Heart right ventricle (tissue), 16 donors: ENCODE measurements at regions of chr16 and their contacts with region 1.

Region 1: GRCh38 chr16:84084570-84085270 is 32.0 kb downstream of the MBTPS1 start:
- DNase-seq: peak; percentile 43 to 64
- ATAC-seq: peak in 7 of 8 donors; percentile 9 to 50 (median 40)
- H3K4me3 ChIP-seq: no peak overlapping the region
- H3K27ac ChIP-seq: peak overlapping the region in 6 of 10 donors; percentile 3 to 77 (median 67)
- H3K4me1 ChIP-seq: peaks cover 0 to 54% (median 25%) of the 10 kb centered on the region in 9 donors
- H3K27me3 ChIP-seq: no peaks in the 10 kb centered on the region
- CTCF ChIP-seq: peak; percentile 30 to 74 (median 66)

Region 2: GRCh38 chr16:83980794-83981193 is 103.9 kb before region 1 on chr16:
- intact Hi-C with region 1: no loop called
- DNase-seq: no peak
- ATAC-seq: peak in 1 of 8 donors; percentile 48
- H3K4me3 ChIP-seq: no peak overlapping the region
- H3K27ac ChIP-seq: no peak overlapping the region
- H3K4me1 ChIP-seq: peaks cover 0 to 8% (median 0%) of the 10 kb centered on the region in 9 donors
- H3K27me3 ChIP-seq: no peaks in the 10 kb centered on the region
- CTCF ChIP-seq: no peak

Region 3: GRCh38 chr16:84116720-84117493 is 32.2 kb after region 1 on chr16 and contains the start of gene MBTPS1:
- intact Hi-C with region 1: loop called in 2 of 10 experiments (anchors 1 to 5 kb)
- DNase-seq: peak; percentile 98 to 99
- ATAC-seq: peak; percentile 98 to 100 (median 99)
- H3K4me3 ChIP-seq: peak within 1 kb of the TSS; percentile 73 to 98 (median 88)
- H3K27ac ChIP-seq: peak within 1 kb of the TSS; percentile 76 to 98 (median 93)
- H3K4me1 ChIP-seq: peaks cover 2 to 42% (median 28%) of the 10 kb centered on the region in 9 donors
- H3K27me3 ChIP-seq: no peaks in the 10 kb centered on the region
- CTCF ChIP-seq: peak in 2 of 9 donors; percentile 23 to 32
- total RNA-seq, gene MBTPS1: 55.9 to 122 (median 73.5) TPM

Region 4: DNA sequence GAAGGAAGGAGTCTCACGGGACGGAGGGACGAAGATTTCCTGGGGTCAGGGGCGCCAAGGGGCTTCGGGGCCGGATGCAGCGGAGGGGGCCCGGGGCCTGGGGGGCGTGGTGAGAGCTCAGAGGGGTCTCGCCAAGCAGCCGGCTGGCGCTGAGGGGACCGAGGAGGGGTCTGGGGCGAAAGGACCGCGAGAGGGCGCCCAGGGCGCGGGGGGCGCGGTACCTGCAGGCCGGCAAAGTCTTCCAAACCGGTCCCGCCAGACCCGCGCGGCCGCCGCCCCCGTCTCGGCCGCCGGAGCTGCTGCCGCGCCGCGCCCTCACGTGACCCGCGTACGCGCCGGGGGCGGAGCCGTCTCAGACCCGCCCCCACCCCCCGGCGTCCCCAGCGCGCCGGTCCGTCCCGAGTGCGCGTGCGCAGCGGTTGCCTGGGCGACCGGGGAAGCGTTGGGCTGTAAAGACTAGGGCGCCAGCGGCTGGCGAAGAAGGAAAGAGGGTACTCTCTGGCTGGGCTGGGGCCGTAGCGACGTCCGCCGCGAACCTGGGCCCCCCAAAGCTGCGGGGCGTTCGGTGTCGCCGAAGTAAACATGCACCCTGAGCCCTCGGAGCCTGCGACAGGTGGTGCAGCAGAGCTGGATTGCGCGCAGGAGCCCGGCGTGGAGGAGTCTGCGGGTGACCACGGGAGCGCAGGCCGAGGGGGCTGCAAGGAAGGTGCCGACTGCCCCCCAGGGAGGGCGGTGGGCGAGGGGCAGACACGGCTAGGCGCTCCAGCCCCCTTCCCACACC is 60.3 kb after region 1 on chr16 and contains the starts of genes DNAAF1 and HSDL1:
- intact Hi-C with region 1: loop called in 2 of 10 experiments (anchors 2 to 10 kb)
- DNase-seq: peak; percentile 90 to 95
- ATAC-seq: peak; percentile 91 to 97 (median 96)
- H3K4me3 ChIP-seq: peak within 1 kb of the TSS; percentile 71 to 99 (median 90)
- H3K27ac ChIP-seq: peak within 1 kb of the TSS in 9 of 10 donors; percentile 65 to 90 (median 81)
- H3K4me1 ChIP-seq: peaks cover 0 to 19% (median 10%) of the 10 kb centered on the region in 9 donors
- H3K27me3 ChIP-seq: peaks cover 0 to 5% (median 0%) of the 10 kb centered on the region in 7 donors
- CTCF ChIP-seq: peak in 5 of 9 donors; percentile 6 to 36 (median 21)
- total RNA-seq, gene DNAAF1: 0.23 to 0.54 (median 0.28) TPM in 3 of 10 donors, not detected in the others
- total RNA-seq, gene HSDL1: 19.4 to 38.5 (median 25.3) TPM

Region 5: GRCh38 chr16:84194470-84195200 is 109.9 kb after region 1 on chr16:
- intact Hi-C with region 1: loop called in 3 of 10 experiments (anchors 5 kb)
- DNase-seq: no peak
- ATAC-seq: peak in 2 of 8 donors; percentile 8 to 23
- H3K4me3 ChIP-seq: peak overlapping the region in 1 of 10 donors; percentile 1
- H3K27ac ChIP-seq: no peak overlapping the region
- H3K4me1 ChIP-seq: peaks cover 0 to 18% (median 0%) of the 10 kb centered on the region in 9 donors
- H3K27me3 ChIP-seq: peaks cover 0 to 33% (median 0%) of the 10 kb centered on the region in 7 donors
- CTCF ChIP-seq: no peak

Region 6: DNA sequence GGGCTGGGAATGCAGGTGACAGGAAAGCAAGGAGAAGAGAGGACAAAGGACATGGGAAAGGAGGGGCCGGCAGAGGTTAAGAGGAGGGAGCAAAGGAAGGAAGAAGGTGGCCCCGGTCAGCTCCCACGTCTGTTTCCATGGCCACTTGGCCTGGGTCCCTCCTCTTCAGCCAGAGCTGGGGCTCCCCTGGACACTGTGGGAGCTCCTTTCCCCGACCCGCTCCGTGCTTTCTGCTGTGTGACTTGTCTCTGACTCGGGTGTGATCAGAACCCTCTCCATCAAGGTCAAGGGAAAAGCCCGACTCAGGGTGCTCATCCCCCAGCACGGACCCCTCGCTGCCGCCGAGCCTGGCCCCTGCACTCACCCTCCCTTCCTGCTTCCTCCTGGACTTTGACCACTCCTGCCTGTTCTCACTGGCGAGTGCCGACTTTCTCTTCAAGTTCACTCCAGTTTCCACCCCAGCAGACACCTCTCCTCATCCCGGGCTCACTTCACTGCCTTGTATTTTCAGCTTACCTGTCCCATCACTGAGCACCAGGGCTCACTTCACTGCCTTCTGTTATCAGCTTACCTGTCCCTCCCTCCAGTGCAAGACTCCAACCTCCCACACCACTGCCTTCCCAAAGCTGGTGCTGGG is 358.6 kb after region 1 on chr16:
- intact Hi-C with region 1: no loop called
- DNase-seq: no peak
- ATAC-seq: peak in 3 of 8 donors; percentile 24 to 41 (median 37)
- H3K4me3 ChIP-seq: no peak overlapping the region
- H3K27ac ChIP-seq: no peak overlapping the region
- H3K4me1 ChIP-seq: no peaks in the 10 kb centered on the region
- H3K27me3 ChIP-seq: peaks cover 0 to 25% (median 12%) of the 10 kb centered on the region in 7 donors
- CTCF ChIP-seq: no peak